CD4-positive, alpha-beta memory T cell (primary cell): ENCODE measurements at regions of chr19 and their contacts with region 1.

Region 1: GRCh38 chr19:44954824-44955586 is at the start of gene CLPTM1:
- DNase-seq: peak; percentile 96
- H3K4me3 ChIP-seq: peak within 1 kb of the TSS; percentile 87 to 96
- H3K4me3 Mint-ChIP-seq: peak within 1 kb of the TSS; percentile 92 to 99 (median 98)
- H3K27ac ChIP-seq: peak within 1 kb of the TSS; percentile 91
- H3K27ac Mint-ChIP-seq: peak within 1 kb of the TSS; percentile 96 to 99 (median 98)
- H3K4me1 ChIP-seq: peaks cover 43% of the 10 kb centered on the region
- H3K4me1 Mint-ChIP-seq: peaks cover 32 to 55% (median 46%) of the 10 kb centered on the region in 4 donors
- H3K27me3 ChIP-seq: no peaks in the 10 kb centered on the region
- H3K27me3 Mint-ChIP-seq: no peaks in the 10 kb centered on the region
- total RNA-seq, gene CLPTM1: 85.1 to 86.4 TPM

Region 2: GRCh38 chr19:44689056-44689895 is 265.7 kb before region 1 on chr19:
- CTCF ChIA-PET with region 1: interaction called, 3 read pairs
- POLR2A ChIA-PET with region 1: no interaction called
- intact Hi-C with region 1: loop called (anchors 10 kb)
- DNase-seq: peak; percentile 66 to 71 (median 68)
- H3K4me3 ChIP-seq: no peak overlapping the region
- H3K4me3 Mint-ChIP-seq: no peak overlapping the region
- H3K27ac ChIP-seq: no peak overlapping the region
- H3K27ac Mint-ChIP-seq: peak overlapping the region in 6 of 7 donors; percentile 8 to 80 (median 58)
- H3K4me1 ChIP-seq: peaks cover 22% of the 10 kb centered on the region
- H3K4me1 Mint-ChIP-seq: peaks cover 20 to 33% (median 26%) of the 10 kb centered on the region in 4 donors
- H3K27me3 ChIP-seq: no peaks in the 10 kb centered on the region
- H3K27me3 Mint-ChIP-seq: peaks cover 8 to 18% of the 10 kb centered on the region in 2 donors

Region 3: GRCh38 chr19:44903602-44904425 is 51.2 kb before region 1 on chr19:
- CTCF ChIA-PET with region 1: interaction called, 18 read pairs
- POLR2A ChIA-PET with region 1: no interaction called
- intact Hi-C with region 1: no loop called
- DNase-seq: peak; percentile 61 to 70 (median 63)
- H3K4me3 ChIP-seq: no peak overlapping the region
- H3K4me3 Mint-ChIP-seq: no peak overlapping the region
- H3K27ac ChIP-seq: no peak overlapping the region
- H3K27ac Mint-ChIP-seq: peak overlapping the region in 2 of 7 donors; percentile 19 to 60
- H3K4me1 ChIP-seq: no peaks in the 10 kb centered on the region
- H3K4me1 Mint-ChIP-seq: peaks cover 7 to 9% (median 8%) of the 10 kb centered on the region in 4 donors
- H3K27me3 ChIP-seq: peaks cover 12% of the 10 kb centered on the region
- H3K27me3 Mint-ChIP-seq: peaks cover 17% of the 10 kb centered on the region in 2 donors

Region 4: GRCh38 chr19:45001087-45001739 is 46.2 kb after region 1 on chr19 and contains the start of gene RELB:
- CTCF ChIA-PET with region 1: interaction called, 3 read pairs
- POLR2A ChIA-PET with region 1: interaction called, 22 read pairs
- intact Hi-C with region 1: loop called (anchors 1 kb)
- DNase-seq: peak; percentile 93 to 97 (median 94)
- H3K4me3 ChIP-seq: peak within 1 kb of the TSS; percentile 47 to 69
- H3K4me3 Mint-ChIP-seq: peak within 1 kb of the TSS; percentile 93 to 99 (median 98)
- H3K27ac ChIP-seq: peak within 1 kb of the TSS; percentile 100
- H3K27ac Mint-ChIP-seq: peak within 1 kb of the TSS; percentile 99 to 100 (median 100)
- H3K4me1 ChIP-seq: peaks cover 13% of the 10 kb centered on the region
- H3K4me1 Mint-ChIP-seq: peaks cover 8 to 25% (median 14%) of the 10 kb centered on the region in 4 donors
- H3K27me3 ChIP-seq: no peaks in the 10 kb centered on the region
- H3K27me3 Mint-ChIP-seq: no peaks in the 10 kb centered on the region
- total RNA-seq, gene RELB: 38.8 to 39.8 TPM

Region 5: DNA sequence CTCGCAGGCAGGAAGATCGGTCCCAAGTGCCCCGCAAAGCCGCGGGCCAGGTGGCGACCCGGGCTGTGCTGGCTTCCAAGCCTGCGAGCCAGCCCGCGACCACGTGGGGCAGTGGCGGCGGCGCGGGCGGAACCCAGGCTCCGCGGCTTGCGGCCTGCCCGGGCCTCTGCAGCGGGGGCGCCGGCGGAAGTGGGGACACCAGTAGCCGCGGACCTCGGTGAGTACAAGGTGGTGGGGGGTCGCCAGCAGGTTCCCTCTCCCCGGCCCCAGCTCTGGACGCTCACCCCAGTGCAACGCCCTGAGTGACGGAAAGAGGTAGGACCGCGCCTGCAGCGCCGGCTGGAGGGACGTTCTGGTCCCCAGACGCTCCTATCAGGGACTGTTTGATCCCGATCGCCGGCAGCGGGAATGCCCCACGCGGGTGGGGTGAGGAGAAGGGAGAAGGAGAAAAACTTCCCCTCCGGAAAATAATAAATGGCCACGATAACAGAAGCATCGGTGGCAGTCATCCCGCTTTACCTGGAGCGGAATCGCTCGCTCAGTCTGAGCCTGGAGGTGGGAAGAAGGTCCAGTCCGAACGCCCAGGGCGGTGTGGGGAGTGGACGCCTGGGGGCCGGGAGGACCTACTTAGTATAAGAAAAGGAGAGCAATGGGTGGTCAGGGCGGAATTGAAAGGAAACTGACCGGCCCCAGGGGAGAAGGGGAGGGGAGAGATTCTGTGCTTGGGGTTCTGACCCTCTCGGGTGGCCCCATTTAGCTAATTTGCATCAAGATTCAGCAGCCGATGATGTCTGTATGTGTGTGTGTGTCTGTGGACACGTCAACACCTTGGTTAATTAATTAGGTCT is 124.3 kb after region 1 on chr19 and contains the start of gene GEMIN7:
- CTCF ChIA-PET with region 1: interaction called, 3 read pairs
- POLR2A ChIA-PET with region 1: no interaction called
- intact Hi-C with region 1: loop called (anchors 10 kb)
- DNase-seq: peak; percentile 66 to 77 (median 72)
- H3K4me3 ChIP-seq: peak within 1 kb of the TSS; percentile 82 to 95
- H3K4me3 Mint-ChIP-seq: peak within 1 kb of the TSS; percentile 89 to 98 (median 93)
- H3K27ac ChIP-seq: peak within 1 kb of the TSS; percentile 80
- H3K27ac Mint-ChIP-seq: peak within 1 kb of the TSS; percentile 84 to 95 (median 88)
- H3K4me1 ChIP-seq: peaks cover 51% of the 10 kb centered on the region
- H3K4me1 Mint-ChIP-seq: peaks cover 25 to 60% (median 44%) of the 10 kb centered on the region in 4 donors
- H3K27me3 ChIP-seq: no peaks in the 10 kb centered on the region
- H3K27me3 Mint-ChIP-seq: no peaks in the 10 kb centered on the region
- total RNA-seq, gene GEMIN7: 15.9 to 17.6 TPM